Activated naive CD4-positive, alpha-beta T cell treated with anti-CD3 and anti-CD28 coated beads for 36 hours (primary cell): ENCODE measurements at regions of chr19 and their contacts with region 1.

Region 1: DNA sequence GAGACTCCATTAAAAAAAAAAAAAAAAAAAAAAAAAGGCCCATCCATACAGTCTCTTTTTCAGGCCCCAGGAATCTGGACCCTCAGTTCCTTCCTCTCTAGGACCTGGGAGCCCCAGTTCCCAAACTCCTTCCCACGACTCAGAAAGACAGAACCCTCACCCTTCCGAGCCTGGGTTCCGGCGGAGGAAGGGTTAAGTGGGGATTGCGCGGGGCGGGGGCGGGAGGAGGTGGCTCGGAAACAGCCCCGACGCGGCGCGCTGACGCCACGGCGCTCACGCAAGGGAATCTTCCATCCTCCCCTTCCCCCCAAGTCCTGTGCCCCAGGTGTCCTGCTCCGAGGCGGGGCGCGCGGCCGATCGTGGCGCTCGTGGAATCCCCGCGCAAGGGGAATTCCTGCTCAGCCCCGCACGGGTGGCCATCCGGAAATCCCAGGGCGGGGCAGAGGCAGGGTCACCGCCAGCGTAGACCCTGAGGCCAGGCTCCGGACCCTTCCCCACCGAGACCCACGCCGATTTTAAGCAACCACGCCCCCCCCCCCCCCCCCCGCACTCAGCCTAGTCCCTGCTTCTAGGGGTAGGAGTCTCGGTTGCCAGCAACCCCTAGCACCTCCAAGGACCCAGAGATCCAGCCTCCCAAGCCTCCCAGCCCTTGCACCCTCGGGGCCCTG is 659 bp downstream of the NFKBID start:
- DNase-seq: peak; percentile 91
- H3K4me3 Mint-ChIP-seq: peak overlapping the region; percentile 94
- H3K27ac Mint-ChIP-seq: peak overlapping the region; percentile 98
- H3K4me1 Mint-ChIP-seq: peaks cover 70% of the 10 kb centered on the region
- H3K27me3 Mint-ChIP-seq: no peaks in the 10 kb centered on the region

Region 2: DNA sequence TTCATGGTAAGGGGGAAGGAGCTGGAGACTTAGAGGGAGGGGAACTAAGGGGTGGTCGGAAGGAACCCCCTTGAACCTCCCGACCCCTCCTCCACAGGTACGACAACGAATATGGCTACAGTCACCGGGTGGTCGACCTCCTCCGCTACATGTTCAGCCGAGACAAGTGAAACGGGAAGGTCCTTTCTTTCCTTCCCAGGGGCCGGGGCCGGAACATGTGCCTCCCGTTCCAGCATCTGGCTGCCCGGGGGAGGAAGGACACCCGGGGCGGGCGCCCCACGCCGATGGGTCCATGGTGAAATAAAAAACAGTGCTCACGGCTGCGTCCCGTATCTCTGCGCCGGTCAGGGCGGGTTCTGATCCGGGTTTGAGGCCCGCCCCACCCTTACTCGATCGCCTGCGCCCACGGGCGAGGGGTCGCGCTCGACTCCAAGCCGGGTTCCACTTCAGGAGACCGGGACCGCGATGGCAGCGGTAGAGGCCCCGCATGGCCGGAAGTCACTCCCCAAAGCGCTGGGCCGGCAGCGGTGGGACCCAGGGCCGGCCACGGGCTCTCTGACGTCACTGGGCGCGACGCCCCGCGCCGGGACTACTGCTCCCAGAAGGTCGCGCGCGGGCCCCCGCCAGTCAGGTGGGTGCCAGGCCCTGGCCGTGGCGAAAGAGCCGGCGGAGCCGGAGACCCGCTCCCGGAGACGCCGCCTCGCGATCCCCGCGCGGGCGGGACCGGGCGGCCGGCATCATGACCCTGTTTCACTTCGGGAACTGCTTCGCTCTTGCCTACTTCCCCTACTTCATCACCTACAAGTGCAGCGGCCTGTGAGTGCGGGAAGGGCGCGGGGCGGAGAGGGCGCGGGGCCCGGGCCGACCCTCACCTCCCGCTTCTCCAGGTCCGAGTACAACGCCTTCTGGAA is 354.4 kb before region 1 on chr19 and contains the start of gene TMEM147:
- CTCF ChIA-PET with region 1: no interaction called
- intact Hi-C with region 1: loop called (anchors 5 kb)
- DNase-seq: peak; percentile 85
- H3K4me3 Mint-ChIP-seq: peak within 1 kb of the TSS; percentile 87
- H3K27ac Mint-ChIP-seq: peak within 1 kb of the TSS; percentile 90
- H3K4me1 Mint-ChIP-seq: peaks cover 38% of the 10 kb centered on the region
- H3K27me3 Mint-ChIP-seq: no peaks in the 10 kb centered on the region
- total RNA-seq, gene TMEM147: 63.1 to 63.4 TPM

Region 3: DNA sequence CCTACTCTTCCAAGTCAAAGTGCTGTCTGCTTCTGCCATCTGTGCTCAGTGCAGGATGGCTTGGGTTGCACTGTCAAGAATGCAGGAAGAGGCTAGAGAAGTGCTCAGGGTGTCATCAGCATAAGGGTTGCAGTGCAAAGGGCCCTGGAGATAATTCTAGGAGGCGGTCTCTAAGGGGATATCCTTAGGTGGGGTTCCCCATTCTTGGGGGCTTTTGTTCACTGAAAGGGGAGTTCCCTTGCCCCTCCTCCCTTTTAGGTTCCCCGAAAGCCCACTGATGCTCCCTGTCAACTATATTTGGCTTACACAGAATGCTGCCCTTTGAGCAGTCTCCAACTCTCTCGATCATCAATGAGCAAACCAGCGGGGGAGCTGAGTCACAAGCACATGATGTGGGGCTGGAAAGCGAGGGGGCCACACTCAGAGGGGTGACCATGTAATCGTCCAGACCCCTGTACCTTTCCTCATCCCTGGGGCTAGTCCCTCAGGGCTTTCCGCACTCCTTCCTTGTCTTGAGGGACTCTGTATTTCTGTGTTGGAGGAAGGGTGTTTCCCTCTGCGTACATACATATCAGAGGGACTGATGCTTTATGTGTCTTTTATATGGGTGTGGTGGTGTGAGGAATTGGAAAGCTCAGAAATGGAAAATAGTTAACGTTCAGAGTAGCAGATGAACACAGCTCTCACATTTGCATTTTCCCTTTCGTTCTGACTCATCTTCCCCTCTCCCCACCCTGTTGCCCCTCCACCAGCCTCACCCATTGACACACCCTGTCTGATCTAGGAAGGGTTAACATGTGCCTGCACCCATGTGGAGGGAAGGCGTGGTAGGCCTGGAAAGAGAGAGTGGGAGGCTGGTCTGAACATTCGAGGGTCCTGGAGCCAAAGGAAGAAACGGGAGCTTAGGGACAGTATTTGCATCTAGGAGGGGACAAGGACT is 188.6 kb before region 1 on chr19:
- CTCF ChIA-PET with region 1: no interaction called
- intact Hi-C with region 1: loop called (anchors 1 kb)
- DNase-seq: peak; percentile 87
- H3K4me3 Mint-ChIP-seq: peak overlapping the region; percentile 52
- H3K27ac Mint-ChIP-seq: peak overlapping the region; percentile 100
- H3K4me1 Mint-ChIP-seq: peaks cover 44% of the 10 kb centered on the region
- H3K27me3 Mint-ChIP-seq: no peaks in the 10 kb centered on the region

Region 4: DNA sequence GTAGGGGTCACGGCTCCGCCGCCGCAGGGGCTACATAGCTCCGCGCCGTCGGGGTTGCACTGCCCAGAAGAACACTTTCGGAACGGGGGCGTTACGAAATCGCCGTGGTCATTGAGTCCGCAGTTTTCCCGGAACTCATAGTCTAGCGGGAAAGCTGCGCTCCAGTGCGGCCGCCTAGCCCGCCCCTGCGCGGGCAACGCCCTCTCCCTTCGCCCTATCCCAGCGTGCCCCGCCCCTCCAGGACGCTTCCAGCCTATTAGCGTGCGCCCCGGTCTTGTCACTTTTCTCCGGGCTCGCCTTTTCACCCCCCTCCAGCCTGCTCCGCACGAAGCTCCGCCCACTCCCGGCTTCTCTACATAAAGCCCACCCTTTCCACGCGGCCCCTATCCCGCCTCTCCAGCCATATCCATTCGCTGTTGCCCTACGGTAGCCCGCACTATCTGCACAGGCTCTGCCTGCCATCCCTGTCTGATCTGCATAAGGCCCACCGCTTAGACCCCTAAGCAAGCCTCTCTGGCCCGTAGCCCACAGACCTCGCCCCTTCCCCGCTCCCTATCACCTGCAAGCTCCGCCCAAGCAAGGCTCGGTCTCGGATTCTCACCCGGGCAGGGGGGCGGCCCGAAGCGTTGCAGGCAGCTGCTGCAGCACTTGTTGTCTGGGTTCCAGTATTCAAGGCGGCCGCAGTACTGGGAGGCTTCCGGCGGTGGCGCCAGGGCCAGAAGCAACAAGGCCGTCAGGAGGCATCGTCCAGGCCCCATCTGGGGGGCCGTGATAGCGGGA is 159.1 kb before region 1 on chr19:
- CTCF ChIA-PET with region 1: no interaction called
- intact Hi-C with region 1: loop called (anchors 1 kb)
- DNase-seq: peak; percentile 99
- H3K4me3 Mint-ChIP-seq: peak overlapping the region; percentile 89
- H3K27ac Mint-ChIP-seq: peak overlapping the region; percentile 97
- H3K4me1 Mint-ChIP-seq: peaks cover 41% of the 10 kb centered on the region
- H3K27me3 Mint-ChIP-seq: no peaks in the 10 kb centered on the region

Region 5: GRCh38 chr19:35775298-35776110 is 124.2 kb before region 1 on chr19 and contains the start of gene ARHGAP33:
- CTCF ChIA-PET with region 1: no interaction called
- intact Hi-C with region 1: loop called (anchors 1 kb)
- DNase-seq: peak; percentile 100
- H3K4me3 Mint-ChIP-seq: peak within 1 kb of the TSS; percentile 78
- H3K27ac Mint-ChIP-seq: no peak within 1 kb of the TSS
- H3K4me1 Mint-ChIP-seq: peaks cover 18% of the 10 kb centered on the region
- H3K27me3 Mint-ChIP-seq: no peaks in the 10 kb centered on the region
- total RNA-seq, gene ARHGAP33: 49.5 to 61.6 TPM

Region 6: GRCh38 chr19:35872180-35872579 is 27.5 kb before region 1 on chr19:
- CTCF ChIA-PET with region 1: no interaction called
- intact Hi-C with region 1: no loop called
- DNase-seq: no peak
- H3K4me3 Mint-ChIP-seq: no peak overlapping the region
- H3K27ac Mint-ChIP-seq: no peak overlapping the region
- H3K4me1 Mint-ChIP-seq: peaks cover 16% of the 10 kb centered on the region
- H3K27me3 Mint-ChIP-seq: peaks cover 46% of the 10 kb centered on the region

Region 7: DNA sequence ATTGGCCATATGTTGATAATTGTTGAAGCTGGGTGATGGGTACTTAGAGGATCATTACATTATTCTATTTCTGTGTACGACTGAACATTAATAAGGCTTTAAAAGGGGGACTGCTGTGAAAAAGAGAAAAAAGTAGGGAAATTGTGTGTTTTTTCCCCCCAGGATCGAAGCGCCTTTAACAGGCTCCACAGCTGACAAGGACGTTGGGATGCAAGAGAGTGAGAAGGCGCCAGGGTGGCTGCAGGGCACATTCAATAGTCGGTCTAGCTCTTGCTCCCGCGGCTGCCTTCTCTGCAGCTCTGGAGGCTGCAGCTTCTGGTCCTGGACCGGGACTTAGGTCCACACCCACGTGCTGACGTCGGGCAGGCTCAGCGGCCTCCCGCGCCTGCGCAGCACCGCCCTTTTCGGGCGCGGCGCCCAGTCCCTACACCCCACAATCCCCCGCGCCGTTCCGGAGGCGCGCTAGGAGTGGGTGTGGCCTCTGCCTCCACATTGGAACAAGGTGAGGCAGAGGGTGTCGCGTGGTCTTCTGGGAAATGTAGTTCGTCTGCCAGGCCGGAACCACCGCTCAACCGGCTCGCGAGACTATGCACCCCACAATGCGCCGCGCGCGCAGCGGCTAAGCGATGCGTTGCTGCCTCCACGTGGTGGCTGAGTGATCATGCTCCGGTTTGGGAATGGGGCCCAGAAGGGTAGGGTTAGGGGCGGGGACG is 31.6 kb after region 1 on chr19:
- CTCF ChIA-PET with region 1: interaction called, 7 read pairs
- intact Hi-C with region 1: loop called (anchors 1 kb)
- DNase-seq: peak; percentile 100
- H3K4me3 Mint-ChIP-seq: peak overlapping the region; percentile 81
- H3K27ac Mint-ChIP-seq: peak overlapping the region; percentile 93
- H3K4me1 Mint-ChIP-seq: peaks cover 32% of the 10 kb centered on the region
- H3K27me3 Mint-ChIP-seq: no peaks in the 10 kb centered on the region

Region 8: DNA sequence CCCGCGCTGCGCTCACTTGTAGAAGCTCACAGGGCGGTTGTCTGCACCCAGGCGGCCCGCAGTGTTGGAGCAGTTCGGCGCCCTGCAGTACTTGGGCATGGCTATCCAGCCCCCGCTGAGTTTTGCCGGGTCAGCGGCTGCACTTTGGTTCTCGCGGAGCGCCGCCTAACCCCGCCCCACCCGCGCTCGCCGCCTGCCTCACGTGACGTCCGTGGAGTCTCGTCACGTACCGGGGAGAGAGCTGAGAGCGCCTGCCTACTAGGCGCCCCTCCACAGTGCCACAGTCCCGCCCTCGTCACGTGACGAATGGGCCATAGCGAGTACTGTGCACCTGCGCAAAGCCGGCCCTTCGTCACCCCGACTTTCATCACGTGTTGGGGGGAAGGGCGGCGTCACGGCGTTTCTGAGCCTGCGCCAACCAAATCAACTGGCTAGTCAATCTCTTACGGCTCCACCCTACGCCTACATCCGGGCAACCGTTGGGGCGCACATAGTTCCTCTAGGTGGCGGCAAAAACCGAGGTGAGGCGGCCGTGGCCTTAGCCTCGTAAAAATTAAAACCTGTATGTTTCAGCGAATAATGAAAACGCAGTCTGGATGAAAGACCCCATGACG is 154.5 kb after region 1 on chr19 and contains the start of gene THAP8:
- CTCF ChIA-PET with region 1: no interaction called
- intact Hi-C with region 1: loop called (anchors 1 kb)
- DNase-seq: peak; percentile 100
- H3K4me3 Mint-ChIP-seq: peak within 1 kb of the TSS; percentile 94
- H3K27ac Mint-ChIP-seq: peak within 1 kb of the TSS; percentile 98
- H3K4me1 Mint-ChIP-seq: peaks cover 18% of the 10 kb centered on the region
- H3K27me3 Mint-ChIP-seq: no peaks in the 10 kb centered on the region
- total RNA-seq, gene THAP8: 1.1 to 1.2 TPM